GM23248 (cell line): ENCODE measurements at regions of chr10 and their contacts with region 1.

Region 1: GRCh38 chr10:14191871-14192270 is 138.9 kb downstream of the FRMD4A start:
- DNase-seq: no peak
- H3K4me3 ChIP-seq: no peak overlapping the region
- H3K27ac ChIP-seq: no peak overlapping the region
- H3K4me1 ChIP-seq: no peaks in the 10 kb centered on the region
- H3K27me3 ChIP-seq: peaks cover 73% of the 10 kb centered on the region

Region 2: GRCh38 chr10:13865758-13866491 is 325.9 kb before region 1 on chr10:
- in situ Hi-C with region 1: no loop called
- DNase-seq: peak; percentile 64
- H3K4me3 ChIP-seq: peak overlapping the region; percentile 48
- H3K27ac ChIP-seq: peak overlapping the region; percentile 67
- H3K4me1 ChIP-seq: peaks cover 19% of the 10 kb centered on the region
- H3K27me3 ChIP-seq: no peaks in the 10 kb centered on the region

Region 3: DNA sequence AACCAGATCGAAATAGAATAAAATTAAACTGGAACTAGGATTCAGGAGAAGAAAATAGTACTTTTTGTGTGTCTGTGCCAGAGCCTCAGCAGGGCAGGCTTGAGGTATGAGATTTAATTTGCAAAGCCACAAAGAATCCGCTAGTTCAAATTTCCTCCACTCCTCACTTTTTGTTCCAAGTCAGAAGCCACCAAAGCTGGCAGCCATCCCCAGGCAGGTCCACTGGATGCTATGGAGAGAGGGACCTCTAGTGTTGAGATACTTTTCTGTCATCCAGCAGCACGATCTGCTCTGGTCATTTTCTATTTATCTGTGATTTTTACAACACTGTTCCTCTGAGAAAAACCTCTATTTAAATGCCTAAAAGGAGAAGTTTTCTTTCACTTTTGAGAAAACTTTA is 286.7 kb after region 1 on chr10:
- in situ Hi-C with region 1: loop called (anchors 10 kb)
- DNase-seq: peak; percentile 78
- H3K4me3 ChIP-seq: no peak overlapping the region
- H3K27ac ChIP-seq: no peak overlapping the region
- H3K4me1 ChIP-seq: peaks cover 12% of the 10 kb centered on the region
- H3K27me3 ChIP-seq: peaks cover 38% of the 10 kb centered on the region

Region 4: GRCh38 chr10:15027741-15028140 is 835.9 kb after region 1 on chr10:
- in situ Hi-C with region 1: no loop called
- DNase-seq: no peak
- H3K4me3 ChIP-seq: no peak overlapping the region
- H3K27ac ChIP-seq: no peak overlapping the region
- H3K4me1 ChIP-seq: no peaks in the 10 kb centered on the region
- H3K27me3 ChIP-seq: no peaks in the 10 kb centered on the region